Dorsolateral prefrontal cortex (tissue), 120 donors: ENCODE measurements at regions of chr1 and their contacts with region 1.

Region 1: DNA sequence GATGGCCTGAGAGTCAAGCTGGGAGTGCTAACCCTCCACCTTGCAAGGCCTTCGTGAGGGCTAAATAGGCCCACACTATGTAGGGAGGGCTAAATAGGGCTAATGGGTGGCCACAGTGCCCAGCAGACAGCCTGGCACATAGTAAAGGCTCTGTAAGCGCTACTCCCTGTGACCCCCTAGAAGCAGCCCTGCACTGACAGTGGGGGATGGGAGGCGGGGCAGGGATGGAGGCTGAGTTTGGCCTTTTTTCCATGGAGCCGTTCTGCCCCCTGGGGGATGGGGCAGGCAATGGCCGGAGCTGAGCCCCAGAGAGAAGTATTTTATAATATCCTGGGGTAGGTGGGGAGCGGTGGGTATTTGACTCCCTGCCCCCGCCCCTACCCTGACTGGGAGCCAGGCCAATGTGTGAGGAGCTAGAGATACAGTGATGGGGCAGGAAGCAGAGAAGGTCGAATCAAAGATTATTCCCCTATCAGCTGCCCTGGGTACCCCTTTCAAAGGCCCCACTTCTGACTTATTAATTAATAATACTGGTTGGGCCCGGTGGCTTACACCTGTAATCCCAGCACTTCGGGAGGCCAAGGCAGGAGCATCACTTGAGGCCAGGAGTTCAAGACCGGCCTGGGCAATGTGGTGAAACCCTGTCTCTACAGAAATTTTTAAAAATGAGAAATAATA is 42.3 kb downstream of the LACTBL1 start:
- DNase-seq: peak in 5 of 10 donors; percentile 38 to 68 (median 52)
- H3K4me3 ChIP-seq: no peak overlapping the region
- H3K27ac ChIP-seq: no peak overlapping the region
- H3K27me3 ChIP-seq: no peaks in the 10 kb centered on the region
- CTCF ChIP-seq: peak; percentile 48 to 90 (median 78)

Region 2: GRCh38 chr1:22416555-22417454 is 513.6 kb before region 1 on chr1:
- intact Hi-C with region 1: loop called in 1 of 2 experiments (anchors 10 kb)
- DNase-seq: peak; percentile 28 to 83 (median 70)
- H3K4me3 ChIP-seq: peak overlapping the region in 7 of 59 donors; percentile 3 to 26 (median 18)
- H3K27ac ChIP-seq: no peak overlapping the region
- H3K27me3 ChIP-seq: peaks cover 0 to 9% (median 0%) of the 10 kb centered on the region in 45 donors
- CTCF ChIP-seq: peak; percentile 54 to 95 (median 88)

Region 3: GRCh38 chr1:22673486-22674409 is 256.6 kb before region 1 on chr1:
- intact Hi-C with region 1: loop called (anchors 1 to 5 kb)
- DNase-seq: peak; percentile 23 to 82 (median 64)
- H3K4me3 ChIP-seq: no peak overlapping the region
- H3K27ac ChIP-seq: no peak overlapping the region
- H3K27me3 ChIP-seq: peaks cover 0 to 19% (median 0%) of the 10 kb centered on the region in 45 donors
- CTCF ChIP-seq: peak; percentile 58 to 93 (median 79)